ENCODE measurements at regions of chr20 and their contacts with region 1.

Region 1: DNA sequence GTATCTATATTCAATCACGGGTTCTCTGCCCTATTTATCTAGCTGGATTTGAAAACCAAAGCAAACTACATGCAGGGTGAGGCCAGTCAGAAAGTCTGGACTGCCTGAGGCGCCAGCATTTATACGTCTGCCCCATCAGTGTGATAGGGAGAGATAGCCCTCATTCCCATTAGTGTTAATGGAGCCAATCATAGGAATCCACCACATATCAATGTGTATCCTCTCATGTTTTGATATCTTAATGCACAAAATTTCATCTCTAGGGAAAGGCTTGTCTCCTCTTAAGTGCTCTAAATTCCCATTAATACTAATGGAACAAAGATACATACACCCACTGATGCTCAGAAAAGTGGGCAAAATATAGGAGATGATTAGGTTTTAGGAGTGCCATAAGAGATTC is 376.2 kb downstream of the BTBD3 start:
- DNase-seq: no peak
- H3K4me3 Mint-ChIP-seq: no peak overlapping the region
- H3K27ac Mint-ChIP-seq: no peak overlapping the region
- H3K4me1 Mint-ChIP-seq: peaks cover 9% of the 10 kb centered on the region
- H3K27me3 Mint-ChIP-seq: no peaks in the 10 kb centered on the region
- CTCF ChIP-seq: no peak

Region 2: DNA sequence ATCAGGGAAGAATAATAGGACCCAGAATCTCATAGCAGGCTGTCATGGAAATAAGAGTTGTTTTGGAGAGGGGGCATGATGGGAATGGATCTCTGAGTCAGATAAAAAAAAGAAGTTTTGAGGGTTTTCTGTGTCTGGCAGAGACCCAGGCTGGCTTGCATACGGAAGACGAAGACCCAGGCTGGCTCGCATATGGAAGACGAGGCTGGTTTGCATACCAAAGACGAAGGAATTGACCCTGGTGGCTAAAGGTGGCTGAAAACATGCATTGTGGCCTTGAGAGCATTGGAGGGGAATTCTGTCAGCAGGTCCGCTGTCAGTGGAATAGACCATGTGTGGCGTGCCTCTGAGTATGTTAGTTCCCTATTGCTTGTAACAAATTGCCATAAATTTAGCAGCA is 41.1 kb before region 1 on chr20:
- CTCF ChIA-PET with region 1: no interaction called
- intact Hi-C with region 1: no loop called
- DNase-seq: no peak
- H3K4me3 Mint-ChIP-seq: no peak overlapping the region
- H3K27ac Mint-ChIP-seq: no peak overlapping the region
- H3K4me1 Mint-ChIP-seq: no peaks in the 10 kb centered on the region
- H3K27me3 Mint-ChIP-seq: no peaks in the 10 kb centered on the region
- CTCF ChIP-seq: no peak

Region 3: GRCh38 chr20:12305188-12305962 is 11.5 kb after region 1 on chr20:
- CTCF ChIA-PET with region 1: interaction called, 11 read pairs
- intact Hi-C with region 1: no loop called
- DNase-seq: no peak
- H3K4me3 Mint-ChIP-seq: no peak overlapping the region
- H3K27ac Mint-ChIP-seq: no peak overlapping the region
- H3K4me1 Mint-ChIP-seq: no peaks in the 10 kb centered on the region
- H3K27me3 Mint-ChIP-seq: no peaks in the 10 kb centered on the region
- CTCF ChIP-seq: no peak

Measured in Calu3 (cell line).